CD4-positive, alpha-beta memory T cell (primary cell): ENCODE measurements at regions of chr2 and their contacts with region 1.

Region 1: DNA sequence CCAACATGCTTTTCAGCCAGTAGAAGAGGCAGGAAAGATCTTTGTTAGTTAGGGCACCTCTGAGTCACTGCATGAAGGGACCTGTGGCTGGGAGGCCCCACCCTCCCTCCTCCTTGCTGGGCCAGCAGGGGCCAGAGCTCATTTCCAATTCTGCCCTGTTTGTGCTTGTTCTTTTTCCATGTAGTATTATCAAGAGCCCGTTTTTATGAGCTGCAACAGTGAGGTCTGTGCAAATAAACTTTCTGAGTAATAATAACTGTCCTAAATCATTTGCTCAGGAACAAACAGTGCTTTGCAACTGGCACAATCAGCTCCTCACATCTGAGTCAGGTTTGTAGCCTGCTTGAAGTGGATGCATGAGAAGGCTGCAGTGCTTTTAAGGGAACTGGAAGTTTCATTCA is 128.0 kb downstream of the ARL4C start:
- DNase-seq: peak; percentile 31 to 70 (median 37)
- H3K4me3 ChIP-seq: no peak overlapping the region
- H3K4me3 Mint-ChIP-seq: peak overlapping the region in 4 of 8 donors; percentile 60 to 77 (median 61)
- H3K27ac ChIP-seq: peak overlapping the region; percentile 33
- H3K27ac Mint-ChIP-seq: peak overlapping the region; percentile 82 to 96 (median 93)
- H3K4me1 ChIP-seq: peaks cover 78% of the 10 kb centered on the region
- H3K4me1 Mint-ChIP-seq: peaks cover 50 to 79% (median 64%) of the 10 kb centered on the region in 4 donors
- H3K27me3 ChIP-seq: no peaks in the 10 kb centered on the region
- H3K27me3 Mint-ChIP-seq: no peaks in the 10 kb centered on the region

Region 2: GRCh38 chr2:234324116-234324515 is 44.7 kb before region 1 on chr2:
- CTCF ChIA-PET with region 1: no interaction called
- POLR2A ChIA-PET with region 1: interaction called, 4 read pairs
- intact Hi-C with region 1: loop called (anchors 5 kb)
- DNase-seq: no peak
- H3K4me3 ChIP-seq: no peak overlapping the region
- H3K4me3 Mint-ChIP-seq: peak overlapping the region in 4 of 8 donors; percentile 20 to 70 (median 49)
- H3K27ac ChIP-seq: no peak overlapping the region
- H3K27ac Mint-ChIP-seq: peak overlapping the region in 6 of 7 donors; percentile 83 to 98 (median 94)
- H3K4me1 ChIP-seq: peaks cover 26% of the 10 kb centered on the region
- H3K4me1 Mint-ChIP-seq: peaks cover 26 to 36% (median 32%) of the 10 kb centered on the region in 4 donors
- H3K27me3 ChIP-seq: no peaks in the 10 kb centered on the region
- H3K27me3 Mint-ChIP-seq: no peaks in the 10 kb centered on the region